Heart left ventricle (tissue), 16 donors: ENCODE measurements at regions of chr22 and their contacts with region 1.

Region 1: GRCh38 chr22:46296257-46297150 is at the start of gene GTSE1:
- DNase-seq: peak; percentile 97 to 100 (median 99)
- ATAC-seq: peak; percentile 97 to 99 (median 98)
- H3K4me3 ChIP-seq: peak within 1 kb of the TSS; percentile 21 to 74 (median 63)
- H3K27ac ChIP-seq: peak within 1 kb of the TSS; percentile 85 to 99 (median 88)
- H3K4me1 ChIP-seq: peaks cover 0 to 37% (median 15%) of the 10 kb centered on the region in 12 donors
- H3K27me3 ChIP-seq: no peaks in the 10 kb centered on the region
- CTCF ChIP-seq: peak in 10 of 12 donors; percentile 4 to 61 (median 30)
- POLR2A ChIP-seq: peak in 1 of 2 donors; percentile 62
- total RNA-seq, gene GTSE1: 0.21 to 6.9 (median 0.64) TPM in 8 of 9 donors, not detected in the other

Region 2: GRCh38 chr22:46122511-46122971 is 174.0 kb before region 1 on chr22:
- intact Hi-C with region 1: loop called in 4 of 10 experiments (anchors 1 to 5 kb)
- DNase-seq: peak; percentile 72 to 92 (median 79)
- ATAC-seq: peak; percentile 50 to 72 (median 60)
- H3K4me3 ChIP-seq: no peak overlapping the region
- H3K27ac ChIP-seq: no peak overlapping the region
- H3K4me1 ChIP-seq: peaks cover 0 to 19% (median 6%) of the 10 kb centered on the region in 12 donors
- H3K27me3 ChIP-seq: no peaks in the 10 kb centered on the region
- CTCF ChIP-seq: peak; percentile 92 to 99 (median 95)
- POLR2A ChIP-seq: no peak

Region 3: GRCh38 chr22:46139895-46140350 is 156.6 kb before region 1 on chr22:
- intact Hi-C with region 1: loop called in 2 of 10 experiments (anchors 5 kb)
- DNase-seq: peak in 4 of 5 donors; percentile 54 to 78 (median 72)
- ATAC-seq: peak; percentile 57 to 89 (median 80)
- H3K4me3 ChIP-seq: no peak overlapping the region
- H3K27ac ChIP-seq: peak overlapping the region; percentile 28 to 86 (median 78)
- H3K4me1 ChIP-seq: peaks cover 0 to 24% (median 11%) of the 10 kb centered on the region in 12 donors
- H3K27me3 ChIP-seq: no peaks in the 10 kb centered on the region
- CTCF ChIP-seq: no peak
- POLR2A ChIP-seq: no peak

Region 4: DNA sequence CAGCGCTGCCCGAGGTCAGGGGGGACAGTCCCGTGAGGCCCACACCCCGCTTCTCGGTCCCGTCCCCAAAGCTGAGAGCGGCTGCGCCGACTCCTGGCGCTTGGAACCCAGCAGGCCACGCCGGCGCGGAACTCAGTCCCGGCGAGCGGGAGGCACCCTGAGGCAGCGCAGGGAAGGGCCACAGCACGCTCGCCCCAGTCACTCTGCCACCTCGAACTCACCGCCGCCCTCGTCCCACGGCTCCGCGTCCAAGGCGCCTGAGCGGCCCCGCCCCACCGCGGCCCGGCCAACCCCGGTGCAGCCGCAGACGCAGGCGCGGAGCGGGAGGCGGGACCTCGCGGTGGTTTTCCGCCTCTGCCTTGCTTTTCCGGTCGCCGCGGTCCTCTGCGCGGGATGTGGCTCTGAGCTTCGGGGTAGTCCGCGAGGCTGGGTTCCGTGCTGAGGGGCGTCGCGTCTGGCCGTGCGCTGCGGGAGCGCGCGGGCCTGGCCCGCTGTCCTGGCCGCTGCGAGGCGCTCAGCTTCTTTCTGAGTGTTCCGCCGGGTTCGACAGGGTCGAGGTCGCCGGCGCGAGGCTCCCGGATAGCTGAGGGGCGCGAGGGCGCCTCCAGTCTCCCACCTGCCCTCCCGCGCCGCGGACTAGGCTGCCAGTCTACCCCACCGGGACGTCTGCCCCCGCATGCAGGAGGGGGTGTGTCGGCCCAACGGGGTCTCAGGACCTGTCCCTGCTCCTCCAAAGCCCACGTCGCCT is 46.3 kb before region 1 on chr22 and contains the start of gene CDPF1:
- intact Hi-C with region 1: loop called in 3 of 10 experiments (anchors 5 kb)
- DNase-seq: peak; percentile 94 to 97 (median 95)
- ATAC-seq: peak; percentile 74 to 94 (median 92)
- H3K4me3 ChIP-seq: peak within 1 kb of the TSS; percentile 53 to 97 (median 81)
- H3K27ac ChIP-seq: peak within 1 kb of the TSS; percentile 69 to 96 (median 94)
- H3K4me1 ChIP-seq: peaks cover 7 to 58% (median 31%) of the 10 kb centered on the region in 12 donors
- H3K27me3 ChIP-seq: no peaks in the 10 kb centered on the region
- CTCF ChIP-seq: peak in 2 of 12 donors; percentile 12 to 31
- POLR2A ChIP-seq: peak; percentile 74 to 96
- total RNA-seq, gene CDPF1: 7.4 to 13.6 (median 9.3) TPM

Region 5: GRCh38 chr22:46256358-46256958 is 40.0 kb before region 1 on chr22:
- intact Hi-C with region 1: loop called in 2 of 10 experiments (anchors 5 kb)
- DNase-seq: no peak
- ATAC-seq: no peak
- H3K4me3 ChIP-seq: no peak overlapping the region
- H3K27ac ChIP-seq: no peak overlapping the region
- H3K4me1 ChIP-seq: peaks cover 0 to 9% (median 2%) of the 10 kb centered on the region in 12 donors
- H3K27me3 ChIP-seq: no peaks in the 10 kb centered on the region
- CTCF ChIP-seq: no peak
- POLR2A ChIP-seq: no peak

Region 6: GRCh38 chr22:46267431-46268279 is 28.8 kb before region 1 on chr22 and contains the start of gene TTC38:
- intact Hi-C with region 1: loop called in 2 of 10 experiments (anchors 2 kb)
- DNase-seq: peak; percentile 96 to 98 (median 96)
- ATAC-seq: peak; percentile 93 to 98 (median 98)
- H3K4me3 ChIP-seq: peak within 1 kb of the TSS; percentile 57 to 93 (median 78)
- H3K27ac ChIP-seq: peak within 1 kb of the TSS; percentile 60 to 96 (median 90)
- H3K4me1 ChIP-seq: peaks cover 0 to 38% (median 23%) of the 10 kb centered on the region in 12 donors
- H3K27me3 ChIP-seq: peaks cover 0 to 2% (median 0%) of the 10 kb centered on the region in 9 donors
- CTCF ChIP-seq: no peak
- POLR2A ChIP-seq: peak in 1 of 2 donors; percentile 72
- total RNA-seq, gene TTC38: 21.3 to 72.4 (median 25.3) TPM

Region 7: DNA sequence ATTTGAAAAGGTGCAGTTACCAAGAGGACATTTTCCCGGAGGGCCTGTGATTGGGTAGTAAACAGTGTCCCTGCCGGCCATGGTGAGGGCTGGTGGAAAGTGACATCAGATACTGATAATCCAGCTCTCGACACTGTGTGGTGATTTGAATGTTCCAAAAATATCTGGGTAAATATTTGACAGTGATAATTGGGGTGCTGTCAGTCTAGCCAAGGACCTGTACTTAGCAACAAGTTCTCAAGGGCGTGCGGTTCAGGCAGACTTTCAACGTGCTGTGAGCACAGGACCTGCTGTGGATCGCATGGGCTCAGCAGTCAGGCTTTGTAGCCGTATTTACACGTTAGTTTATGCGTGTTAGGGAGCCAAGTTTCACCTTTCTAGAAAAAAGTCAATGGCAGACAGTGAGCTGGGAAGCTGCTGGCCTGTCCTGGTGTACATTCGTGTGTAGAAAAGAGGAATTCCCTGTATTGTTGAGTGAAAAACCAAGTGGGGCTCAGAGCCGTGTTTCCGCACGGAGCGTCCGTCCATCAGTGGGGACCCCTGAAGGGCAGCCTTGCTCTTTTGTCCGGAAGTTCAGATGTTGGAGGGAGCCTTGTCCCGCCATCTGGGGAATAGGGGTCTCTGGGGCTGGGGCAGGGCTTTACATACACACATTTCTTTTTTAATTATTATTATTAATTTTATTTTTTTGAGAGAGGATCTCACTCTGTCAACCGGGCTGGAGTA is 50.3 kb after region 1 on chr22:
- intact Hi-C with region 1: no loop called
- DNase-seq: peak; percentile 62 to 89 (median 67)
- ATAC-seq: peak; percentile 75 to 89 (median 81)
- H3K4me3 ChIP-seq: no peak overlapping the region
- H3K27ac ChIP-seq: peak overlapping the region; percentile 73 to 94 (median 88)
- H3K4me1 ChIP-seq: peaks cover 0 to 55% (median 25%) of the 10 kb centered on the region in 12 donors
- H3K27me3 ChIP-seq: no peaks in the 10 kb centered on the region
- CTCF ChIP-seq: peak in 1 of 12 donors; percentile 7
- POLR2A ChIP-seq: no peak